Body of pancreas (tissue), 4 donors: ENCODE measurements at regions of chr6 and their contacts with region 1.

Region 1: GRCh38 chr6:26064619-26065257 is 22.5 kb upstream of the HFE start:
- DNase-seq: peak; percentile 25 to 42 (median 38)
- ATAC-seq: peak; percentile 82
- H3K4me3 ChIP-seq: no peak overlapping the region
- H3K27ac ChIP-seq: no peak overlapping the region
- H3K4me1 ChIP-seq: peaks cover 7% of the 10 kb centered on the region
- H3K27me3 ChIP-seq: no peaks in the 10 kb centered on the region
- CTCF ChIP-seq: peak; percentile 40 to 84 (median 82)
- POLR2A ChIP-seq: no peak

Region 2: GRCh38 chr6:25641940-25642666 is 422.6 kb before region 1 on chr6:
- intact Hi-C with region 1: no loop called
- DNase-seq: no peak
- ATAC-seq: peak; percentile 49
- H3K4me3 ChIP-seq: no peak overlapping the region
- H3K27ac ChIP-seq: peak overlapping the region; percentile 32 to 76 (median 58)
- H3K4me1 ChIP-seq: peaks cover 35% of the 10 kb centered on the region
- H3K27me3 ChIP-seq: no peaks in the 10 kb centered on the region
- CTCF ChIP-seq: no peak
- POLR2A ChIP-seq: no peak

Region 3: DNA sequence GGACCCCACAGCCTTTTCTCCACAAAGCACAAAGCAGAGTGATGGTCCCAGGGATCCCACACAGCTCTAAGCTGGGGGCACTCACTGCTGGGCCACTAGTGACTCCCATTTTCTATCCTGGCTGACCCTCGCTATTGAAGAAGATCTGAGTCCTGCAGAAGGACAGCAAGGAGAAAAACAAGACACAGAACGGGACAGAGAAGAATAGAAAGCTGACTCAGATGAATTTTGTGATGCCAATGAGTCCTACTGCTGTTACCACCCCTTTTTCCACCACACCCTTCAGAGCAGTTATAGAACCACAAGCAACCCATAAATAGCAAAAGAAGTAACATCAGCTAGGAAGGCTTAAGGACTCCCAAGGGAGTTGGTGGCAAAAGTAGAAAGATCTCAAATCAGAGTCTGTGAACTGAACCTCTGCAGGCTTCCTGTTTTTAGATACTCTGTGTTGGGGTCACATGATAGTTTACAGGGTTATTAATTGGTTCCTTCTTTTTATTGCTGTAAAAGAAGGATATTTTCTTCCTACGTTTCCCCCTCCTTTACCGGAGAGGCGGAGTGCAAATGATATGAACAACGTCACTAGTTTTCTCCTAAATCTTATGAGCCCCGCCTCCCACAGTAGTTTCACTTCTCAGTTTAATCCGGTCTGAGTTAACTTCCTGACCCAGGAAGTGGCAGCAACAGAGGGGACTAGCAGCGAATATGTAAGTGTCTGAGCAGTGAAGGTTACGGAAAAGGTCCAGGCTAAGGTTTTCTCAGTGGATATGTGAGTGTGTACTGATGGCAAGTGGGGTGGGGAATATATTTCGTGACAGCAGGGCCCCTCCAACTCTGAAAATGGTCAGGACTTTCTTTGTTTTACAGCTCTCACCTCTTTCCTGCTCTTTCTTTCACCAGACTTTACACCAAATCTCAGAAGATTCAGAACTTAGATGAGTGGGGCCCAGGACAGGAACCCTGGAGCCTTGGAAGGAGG is 102.3 kb before region 1 on chr6 and contains the start of gene TRIM38:
- intact Hi-C with region 1: no loop called
- DNase-seq: peak; percentile 65 to 90 (median 78)
- ATAC-seq: peak; percentile 93
- H3K4me3 ChIP-seq: peak within 1 kb of the TSS; percentile 9 to 42
- H3K27ac ChIP-seq: peak within 1 kb of the TSS; percentile 74 to 89 (median 82)
- H3K4me1 ChIP-seq: peaks cover 26% of the 10 kb centered on the region
- H3K27me3 ChIP-seq: no peaks in the 10 kb centered on the region
- CTCF ChIP-seq: peak in 1 of 7 experiments; percentile 3
- POLR2A ChIP-seq: peak; percentile 51 to 94 (median 94)
- total RNA-seq, gene TRIM38: 3.9 to 4.0 TPM

Region 4: GRCh38 chr6:26097268-26097875 is 32.6 kb after region 1 on chr6:
- intact Hi-C with region 1: loop called (anchors 5 kb)
- DNase-seq: peak; percentile 71 to 79 (median 76)
- ATAC-seq: peak; percentile 96
- H3K4me3 ChIP-seq: no peak overlapping the region
- H3K27ac ChIP-seq: no peak overlapping the region
- H3K4me1 ChIP-seq: peaks cover under 1% of the 10 kb centered on the region
- H3K27me3 ChIP-seq: no peaks in the 10 kb centered on the region
- CTCF ChIP-seq: peak; percentile 55 to 90 (median 83)
- POLR2A ChIP-seq: no peak

Region 5: GRCh38 chr6:26175428-26176181 is 110.9 kb after region 1 on chr6:
- intact Hi-C with region 1: no loop called
- DNase-seq: peak in 1 of 4 donors; percentile 25
- ATAC-seq: no peak
- H3K4me3 ChIP-seq: no peak overlapping the region
- H3K27ac ChIP-seq: no peak overlapping the region
- H3K4me1 ChIP-seq: peaks cover 15% of the 10 kb centered on the region
- H3K27me3 ChIP-seq: no peaks in the 10 kb centered on the region
- CTCF ChIP-seq: peak; percentile 12 to 58 (median 42)
- POLR2A ChIP-seq: no peak

Region 6: GRCh38 chr6:26331218-26332073 is 266.7 kb after region 1 on chr6:
- intact Hi-C with region 1: no loop called
- DNase-seq: no peak
- ATAC-seq: no peak
- H3K4me3 ChIP-seq: no peak overlapping the region
- H3K27ac ChIP-seq: no peak overlapping the region
- H3K4me1 ChIP-seq: no peaks in the 10 kb centered on the region
- H3K27me3 ChIP-seq: peaks cover 4 to 40% of the 10 kb centered on the region in 2 donors
- CTCF ChIP-seq: no peak
- POLR2A ChIP-seq: no peak